MCF 10A (cell line): ENCODE measurements at regions of chr7 and their contacts with region 1.

Region 1: GRCh38 chr7:28615091-28615490 is 202.8 kb downstream of the CREB5 start:
- DNase-seq: no peak
- H3K4me3 Mint-ChIP-seq: no peak overlapping the region
- H3K27ac Mint-ChIP-seq: no peak overlapping the region
- H3K4me1 Mint-ChIP-seq: peaks cover 11% of the 10 kb centered on the region
- H3K27me3 Mint-ChIP-seq: no peaks in the 10 kb centered on the region
- CTCF ChIP-seq: no peak

Region 2: GRCh38 chr7:28427236-28427635 is 187.9 kb before region 1 on chr7:
- CTCF ChIA-PET with region 1: no interaction called
- POLR2A ChIA-PET with region 1: no interaction called
- intact Hi-C with region 1: no loop called
- DNase-seq: no peak
- H3K4me3 Mint-ChIP-seq: no peak overlapping the region
- H3K27ac Mint-ChIP-seq: no peak overlapping the region
- H3K4me1 Mint-ChIP-seq: peaks cover 5% of the 10 kb centered on the region
- H3K27me3 Mint-ChIP-seq: no peaks in the 10 kb centered on the region
- CTCF ChIP-seq: no peak

Region 3: GRCh38 chr7:28536259-28536658 is 78.8 kb before region 1 on chr7:
- CTCF ChIA-PET with region 1: interaction called, 3 read pairs
- POLR2A ChIA-PET with region 1: no interaction called
- intact Hi-C with region 1: loop called (anchors 10 kb)
- DNase-seq: peak; percentile 51
- H3K4me3 Mint-ChIP-seq: no peak overlapping the region
- H3K27ac Mint-ChIP-seq: no peak overlapping the region
- H3K4me1 Mint-ChIP-seq: peaks cover 12% of the 10 kb centered on the region
- H3K27me3 Mint-ChIP-seq: no peaks in the 10 kb centered on the region
- CTCF ChIP-seq: peak; percentile 38